ENCODE measurements at regions of chr6 and their contacts with region 1.

Region 1: DNA sequence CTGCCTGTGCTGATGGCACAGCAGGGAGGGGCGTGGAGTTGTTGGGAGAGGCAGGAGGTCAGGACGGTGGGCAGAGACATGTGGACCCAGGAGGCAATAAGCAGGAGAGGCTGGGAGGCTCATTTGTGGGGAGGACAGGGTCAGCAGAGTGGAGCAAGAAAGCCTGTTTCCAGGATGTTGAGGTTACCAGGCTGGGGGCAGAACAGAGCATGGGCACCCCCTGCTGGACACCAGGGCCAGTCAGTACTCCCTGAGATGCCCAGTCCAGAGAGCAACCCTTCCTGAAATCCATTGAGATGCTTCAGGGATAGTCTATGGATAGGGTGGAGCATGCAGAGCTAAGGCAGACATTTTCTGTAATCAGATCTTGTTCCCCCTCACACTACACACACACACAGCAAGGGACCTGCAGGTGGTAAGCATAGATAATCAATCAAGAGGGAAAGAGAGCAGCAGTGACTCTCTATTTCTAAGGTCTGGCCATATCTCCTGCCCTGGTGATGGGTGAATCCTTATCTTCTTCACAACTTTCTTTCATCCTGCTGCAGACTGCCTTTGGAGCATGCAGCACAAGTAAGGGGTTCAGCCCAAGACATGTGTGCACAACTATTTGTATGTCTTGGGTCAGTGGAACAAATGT is 41.7 kb downstream of the MOCS1 start:
- DNase-seq: peak; percentile 6
- ATAC-seq: peak; percentile 95
- H3K4me3 ChIP-seq: no peak overlapping the region
- H3K27ac ChIP-seq: no peak overlapping the region
- H3K4me1 ChIP-seq: no peaks in the 10 kb centered on the region
- H3K27me3 ChIP-seq: peaks cover 28% of the 10 kb centered on the region
- CTCF ChIP-seq: peak; percentile 47 to 71 (median 66); a peak in 5 of 6 replicates
- POLR2A ChIP-seq: no peak
- RAD21 ChIP-seq: peak; percentile 73

Region 2: DNA sequence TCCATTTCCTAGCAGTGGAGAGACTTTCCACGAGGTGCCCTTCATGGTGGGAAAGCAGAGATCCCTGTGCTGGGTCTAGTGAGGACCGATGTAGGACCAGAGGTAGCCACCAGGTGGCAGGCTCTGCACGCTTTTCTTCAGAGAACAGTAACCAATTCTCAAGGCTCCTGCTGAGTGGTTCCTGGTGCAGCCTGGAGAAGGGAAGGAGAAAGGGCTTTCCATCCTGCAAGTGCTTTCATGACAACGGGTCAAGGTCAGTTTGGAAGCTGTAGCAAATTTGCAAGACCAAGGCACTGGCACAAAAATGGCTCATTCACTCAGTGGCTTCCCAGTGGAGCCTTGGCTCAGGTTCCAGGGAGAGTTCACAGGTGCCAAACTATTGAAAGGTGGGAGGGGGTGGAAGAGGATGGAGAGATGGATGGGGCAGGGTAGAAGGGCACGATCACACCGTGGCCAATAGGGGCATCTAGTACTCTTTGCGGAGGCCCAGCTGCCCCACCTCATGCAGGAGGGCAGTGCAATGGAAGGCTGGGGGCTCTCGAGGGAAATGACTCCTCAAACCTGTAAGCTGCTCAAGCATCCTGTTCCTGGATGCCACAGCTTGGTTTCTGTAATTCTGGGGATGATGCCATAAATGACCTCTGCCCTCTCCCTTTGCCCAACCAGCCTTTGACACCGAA is 544.6 kb before region 1 on chr6:
- CTCF ChIA-PET with region 1: no interaction called
- POLR2A ChIA-PET with region 1: no interaction called
- RAD21 ChIA-PET with region 1: no interaction called
- intact Hi-C with region 1: loop called (anchors 1 kb)
- DNase-seq: peak; percentile 24
- ATAC-seq: peak; percentile 92
- H3K4me3 ChIP-seq: no peak overlapping the region
- H3K27ac ChIP-seq: no peak overlapping the region
- H3K4me1 ChIP-seq: no peaks in the 10 kb centered on the region
- H3K27me3 ChIP-seq: no peaks in the 10 kb centered on the region; the same call in 1 of the 2 replicates
- CTCF ChIP-seq: peak; percentile 51 to 87 (median 85); a peak in 5 of 6 replicates
- POLR2A ChIP-seq: no peak
- RAD21 ChIP-seq: peak; percentile 79

Region 3: GRCh38 chr6:39361657-39362486 is 530.7 kb before region 1 on chr6:
- CTCF ChIA-PET with region 1: interaction called, 6 read pairs
- POLR2A ChIA-PET with region 1: no interaction called
- RAD21 ChIA-PET with region 1: no interaction called
- intact Hi-C with region 1: loop called (anchors 1 kb)
- DNase-seq: peak; percentile 48
- ATAC-seq: peak; percentile 95
- H3K4me3 ChIP-seq: no peak overlapping the region
- H3K27ac ChIP-seq: no peak overlapping the region
- H3K4me1 ChIP-seq: peaks cover 0 to 15% of the 10 kb centered on the region in 2 experiments; a peak in 2 of 4 replicates
- H3K27me3 ChIP-seq: no peaks in the 10 kb centered on the region
- CTCF ChIP-seq: peak; percentile 39 to 80 (median 71); a peak in 5 of 6 replicates
- POLR2A ChIP-seq: no peak
- RAD21 ChIP-seq: peak; percentile 79

Region 4: DNA sequence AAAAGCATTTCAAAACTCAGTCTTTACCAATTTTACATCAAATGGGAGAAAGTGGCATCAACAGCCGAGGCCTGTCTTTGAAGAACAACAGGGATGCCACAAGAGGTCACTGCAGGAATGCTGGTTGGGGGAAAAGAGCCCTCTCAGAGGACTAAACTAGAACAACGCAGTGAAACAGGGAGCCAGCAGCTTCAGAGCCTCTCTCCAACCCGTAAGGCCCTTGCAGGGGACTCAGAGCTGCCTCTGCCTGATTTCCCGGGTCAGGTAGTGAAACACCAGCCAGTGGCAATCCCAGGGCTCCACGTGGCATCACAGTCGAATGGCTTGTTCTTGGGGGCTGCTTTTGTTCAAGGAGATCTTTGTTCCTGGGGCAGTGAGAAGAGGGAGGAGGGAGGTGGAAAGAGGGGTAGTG is 515.1 kb before region 1 on chr6:
- CTCF ChIA-PET with region 1: interaction called, 3 read pairs
- POLR2A ChIA-PET with region 1: no interaction called
- RAD21 ChIA-PET with region 1: no interaction called
- intact Hi-C with region 1: loop called (anchors 1 kb)
- DNase-seq: peak; percentile 23
- ATAC-seq: peak; percentile 82
- H3K4me3 ChIP-seq: no peak overlapping the region
- H3K27ac ChIP-seq: no peak overlapping the region
- H3K4me1 ChIP-seq: no peaks in the 10 kb centered on the region
- H3K27me3 ChIP-seq: peaks cover 52% of the 10 kb centered on the region
- CTCF ChIP-seq: peak; percentile 18 to 59 (median 42); a peak in 3 of 6 replicates
- POLR2A ChIP-seq: no peak
- RAD21 ChIP-seq: peak; percentile 75

Region 5: GRCh38 chr6:39446909-39447308 is 445.7 kb before region 1 on chr6:
- CTCF ChIA-PET with region 1: no interaction called
- POLR2A ChIA-PET with region 1: no interaction called
- RAD21 ChIA-PET with region 1: no interaction called
- intact Hi-C with region 1: no loop called
- DNase-seq: no peak
- ATAC-seq: no peak
- H3K4me3 ChIP-seq: no peak overlapping the region
- H3K27ac ChIP-seq: no peak overlapping the region
- H3K4me1 ChIP-seq: no peaks in the 10 kb centered on the region
- H3K27me3 ChIP-seq: peaks cover 21% of the 10 kb centered on the region
- CTCF ChIP-seq: no peak
- POLR2A ChIP-seq: no peak
- RAD21 ChIP-seq: no peak

Region 6: DNA sequence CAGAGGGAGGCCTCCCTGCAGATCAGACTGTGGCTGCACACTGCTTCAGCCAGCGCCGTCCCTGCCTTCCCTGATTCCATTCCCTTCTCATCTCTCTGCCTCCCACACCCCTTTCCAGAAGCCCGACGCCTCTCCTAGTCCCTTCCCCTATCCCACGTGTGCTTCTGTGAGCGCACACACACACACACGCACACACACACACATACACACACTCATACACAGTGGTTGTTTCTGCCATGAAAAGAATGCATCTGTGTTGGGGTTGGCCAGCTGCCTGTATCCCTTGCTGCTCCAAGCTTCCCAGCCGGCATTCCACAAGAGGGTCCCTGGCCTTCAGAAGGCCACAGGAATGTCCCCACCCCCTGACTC is 10.1 kb before region 1 on chr6:
- CTCF ChIA-PET with region 1: no interaction called
- POLR2A ChIA-PET with region 1: no interaction called
- RAD21 ChIA-PET with region 1: no interaction called
- intact Hi-C with region 1: no loop called
- DNase-seq: no peak
- ATAC-seq: no peak
- H3K4me3 ChIP-seq: no peak overlapping the region
- H3K27ac ChIP-seq: no peak overlapping the region
- H3K4me1 ChIP-seq: no peaks in the 10 kb centered on the region
- H3K27me3 ChIP-seq: 0 out of 2 replicates have a peak, but pooled peaks cover 4% of the 10 kb centered on the region
- CTCF ChIP-seq: no peak
- POLR2A ChIP-seq: no peak
- RAD21 ChIP-seq: no peak

Region 7: DNA sequence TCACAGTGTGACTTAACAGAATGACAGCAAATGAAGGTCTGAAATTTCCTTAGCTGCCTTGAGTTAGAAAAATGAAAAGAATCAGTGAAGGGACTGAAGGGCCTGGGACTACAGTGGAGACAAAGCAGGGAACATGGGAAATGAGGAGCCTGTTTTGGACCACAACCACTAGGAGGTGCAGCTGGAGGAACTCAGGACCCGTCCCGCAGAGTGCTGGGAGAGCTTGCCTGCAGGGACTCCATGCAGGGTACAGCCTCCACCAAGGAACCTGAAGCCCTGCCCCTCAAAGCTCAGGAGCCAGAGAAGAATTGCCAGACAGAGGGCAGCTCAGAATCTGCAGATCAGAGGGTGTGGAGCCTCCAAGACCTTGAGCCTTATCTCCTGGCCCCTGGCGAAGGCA is 643.8 kb after region 1 on chr6:
- CTCF ChIA-PET with region 1: no interaction called
- POLR2A ChIA-PET with region 1: no interaction called
- RAD21 ChIA-PET with region 1: no interaction called
- intact Hi-C with region 1: no loop called
- DNase-seq: no peak
- ATAC-seq: peak; percentile 89
- H3K4me3 ChIP-seq: no peak overlapping the region
- H3K27ac ChIP-seq: no peak overlapping the region
- H3K4me1 ChIP-seq: no peaks in the 10 kb centered on the region
- H3K27me3 ChIP-seq: peaks cover 20% of the 10 kb centered on the region
- CTCF ChIP-seq: peak in 2 of 3 experiments; percentile 41 to 47; a peak in 4 of 6 replicates
- POLR2A ChIP-seq: no peak
- RAD21 ChIP-seq: 0 out of 2 replicates have a peak, but pooled peaks have one; percentile 11

Measured in HCT116 (cell line).